Heart left ventricle (tissue), 16 donors: ENCODE measurements at regions of chr11 and their contacts with region 1.

Region 1: DNA sequence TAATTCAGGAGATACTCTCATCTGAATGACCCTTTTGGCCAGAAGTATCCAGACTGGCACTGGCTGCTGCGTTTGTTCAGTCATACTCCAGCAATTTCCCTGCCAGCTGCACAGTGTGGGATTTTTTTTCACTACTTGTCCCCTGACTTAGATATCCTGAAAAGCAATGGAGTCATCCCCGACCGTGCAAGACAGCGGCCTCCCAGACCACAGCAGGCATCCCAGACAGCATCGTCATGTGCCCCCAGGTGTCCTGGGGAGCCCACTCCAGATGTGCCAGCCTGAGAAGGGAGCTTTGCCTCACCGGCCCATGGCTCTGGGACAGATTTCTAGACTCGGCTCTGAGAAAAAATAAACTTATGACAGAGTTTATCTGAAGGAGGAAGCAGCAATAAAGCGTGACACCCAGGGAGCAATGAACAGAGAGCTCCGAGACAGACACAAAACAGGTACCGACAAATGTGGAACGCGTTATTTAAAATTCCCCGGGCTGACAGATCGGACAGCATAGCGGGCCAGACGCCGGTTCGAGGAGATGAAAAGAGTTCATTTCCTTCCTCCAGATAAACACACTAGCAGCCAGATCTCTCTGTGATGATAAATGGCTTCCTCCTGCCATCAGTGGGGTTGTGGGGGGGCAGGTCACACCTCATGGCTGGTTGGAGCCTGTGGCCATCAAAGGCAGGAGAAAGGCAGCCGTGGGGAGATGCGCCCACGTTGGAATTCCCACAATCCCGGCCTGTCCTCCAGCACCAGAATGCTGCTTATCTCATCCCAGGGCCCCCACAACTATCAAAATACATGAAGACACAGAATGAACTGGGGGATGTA is 106.4 kb upstream of the FGF3 start:
- DNase-seq: peak in 1 of 5 donors; percentile 8
- ATAC-seq: no peak
- H3K4me3 ChIP-seq: no peak overlapping the region
- H3K27ac ChIP-seq: peak overlapping the region in 2 of 12 donors; percentile 48 to 57
- H3K4me1 ChIP-seq: peaks cover 0 to 11% (median 0%) of the 10 kb centered on the region in 12 donors
- H3K27me3 ChIP-seq: peaks cover 0 to 45% (median 0%) of the 10 kb centered on the region in 9 donors
- CTCF ChIP-seq: no peak
- POLR2A ChIP-seq: no peak

Region 2: DNA sequence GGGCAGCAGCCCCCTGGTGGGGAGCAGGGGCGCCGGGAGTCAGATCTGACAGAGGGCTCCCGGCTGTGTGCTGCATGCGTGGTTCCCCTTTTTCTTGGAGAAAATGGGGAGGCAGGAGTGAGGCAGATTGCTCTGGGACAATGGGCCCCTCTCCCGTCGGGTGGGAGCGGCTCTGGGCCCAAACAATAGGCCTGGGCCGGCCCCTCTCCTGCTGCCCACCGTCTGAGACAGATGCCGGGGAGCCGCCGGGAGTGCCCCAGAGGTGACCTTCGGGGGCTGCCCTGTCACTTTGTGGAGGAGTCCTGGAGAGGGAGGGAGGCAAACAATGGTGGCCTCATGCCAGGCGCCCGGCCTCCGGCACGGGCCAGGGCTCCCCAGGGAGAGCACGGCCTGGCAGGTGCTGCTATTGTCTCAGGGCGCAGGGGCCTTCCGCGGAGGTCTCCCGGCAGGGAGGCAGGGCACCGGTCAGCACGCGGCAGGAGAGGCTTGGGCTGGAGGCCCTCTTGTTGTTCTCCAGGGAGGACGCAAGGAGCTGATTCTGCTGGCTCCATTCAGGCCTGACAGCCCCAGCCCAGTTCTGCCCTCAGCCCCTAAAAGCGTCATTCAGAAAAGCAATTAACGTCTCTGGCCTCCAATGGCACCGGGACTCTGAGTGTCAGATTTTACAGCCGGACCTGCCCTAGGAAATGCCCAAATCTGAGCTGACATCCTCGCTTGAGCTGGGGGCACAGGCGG is 725.1 kb before region 1 on chr11:
- intact Hi-C with region 1: no loop called
- DNase-seq: peak; percentile 53 to 76 (median 55)
- ATAC-seq: peak in 3 of 4 donors; percentile 34 to 74 (median 54)
- H3K4me3 ChIP-seq: no peak overlapping the region
- H3K27ac ChIP-seq: no peak overlapping the region
- H3K4me1 ChIP-seq: peaks cover 0 to 13% (median 8%) of the 10 kb centered on the region in 12 donors
- H3K27me3 ChIP-seq: peaks cover 0 to 8% (median 0%) of the 10 kb centered on the region in 9 donors
- CTCF ChIP-seq: no peak
- POLR2A ChIP-seq: no peak

Region 3: GRCh38 chr11:70016666-70017367 is 91.2 kb after region 1 on chr11:
- intact Hi-C with region 1: no loop called
- DNase-seq: no peak
- ATAC-seq: no peak
- H3K4me3 ChIP-seq: no peak overlapping the region
- H3K27ac ChIP-seq: peak overlapping the region in 5 of 12 donors; percentile 27 to 57 (median 49)
- H3K4me1 ChIP-seq: peaks cover 0 to 31% (median 4%) of the 10 kb centered on the region in 12 donors
- H3K27me3 ChIP-seq: no peaks in the 10 kb centered on the region
- CTCF ChIP-seq: no peak
- POLR2A ChIP-seq: no peak

Region 4: GRCh38 chr11:70082829-70083228 is 157.2 kb after region 1 on chr11:
- intact Hi-C with region 1: loop called in 2 of 10 experiments (anchors 5 to 10 kb)
- DNase-seq: peak in 1 of 5 donors; percentile 10
- ATAC-seq: no peak
- H3K4me3 ChIP-seq: no peak overlapping the region
- H3K27ac ChIP-seq: peak overlapping the region in 1 of 12 donors; percentile 34
- H3K4me1 ChIP-seq: peaks cover 0 to 24% (median 2%) of the 10 kb centered on the region in 12 donors
- H3K27me3 ChIP-seq: peaks cover 0 to 19% (median 4%) of the 10 kb centered on the region in 9 donors
- CTCF ChIP-seq: peak in 4 of 12 donors; percentile 11 to 30 (median 18)
- POLR2A ChIP-seq: no peak